Activated CD4-positive, alpha-beta memory T cell treated with anti-CD3 and anti-CD28 coated beads for 36 hours (primary cell): ENCODE measurements at regions of chr13 and their contacts with region 1.

Region 1: DNA sequence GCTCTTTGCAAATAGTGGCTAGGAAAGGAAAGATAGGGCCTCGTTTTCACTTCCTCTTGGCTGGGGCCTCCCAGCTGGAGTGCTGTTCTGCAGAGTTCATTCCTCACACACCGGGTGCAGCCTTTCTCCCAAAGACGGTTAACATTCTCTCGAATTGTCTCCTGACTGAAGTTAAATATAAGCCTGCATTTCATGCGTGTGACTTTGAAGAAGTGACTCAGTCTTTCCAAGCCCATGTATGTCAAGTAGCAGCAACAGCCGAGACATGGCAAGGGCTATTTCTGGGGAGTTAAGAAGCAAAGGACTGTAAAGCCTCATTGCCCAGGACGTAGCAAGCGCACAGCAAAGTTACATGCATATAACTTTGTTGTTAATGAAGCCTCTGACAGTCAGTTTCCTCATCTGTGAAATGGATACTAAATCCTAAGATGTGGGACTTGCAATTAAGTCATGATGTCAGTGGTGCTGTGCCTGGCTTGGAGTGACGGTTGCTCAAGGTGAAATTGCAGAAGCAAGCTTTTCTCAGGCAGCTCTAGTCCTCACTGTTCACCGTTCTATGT is 502.4 kb downstream of the MYO16 start:
- DNase-seq: no peak
- H3K4me3 Mint-ChIP-seq: no peak overlapping the region
- H3K27ac Mint-ChIP-seq: no peak overlapping the region
- H3K4me1 Mint-ChIP-seq: no peaks in the 10 kb centered on the region
- H3K27me3 Mint-ChIP-seq: no peaks in the 10 kb centered on the region

Region 2: GRCh38 chr13:108961542-108962125 is 170.1 kb before region 1 on chr13:
- CTCF ChIA-PET with region 1: no interaction called
- POLR2A ChIA-PET with region 1: no interaction called
- intact Hi-C with region 1: loop called (anchors 10 kb)
- DNase-seq: no peak
- H3K4me3 Mint-ChIP-seq: no peak overlapping the region
- H3K27ac Mint-ChIP-seq: no peak overlapping the region
- H3K4me1 Mint-ChIP-seq: peaks cover 2% of the 10 kb centered on the region
- H3K27me3 Mint-ChIP-seq: no peaks in the 10 kb centered on the region